ENCODE measurements at regions of chr5 and their contacts with region 1.

Region 1: GRCh38 chr5:54517174-54518092 is at the start of gene SNX18:
- DNase-seq: peak; percentile 87 to 91 (median 90)
- H3K4me3 ChIP-seq: peak within 1 kb of the TSS; percentile 82 to 91 (median 82)
- H3K4me3 Mint-ChIP-seq: peak within 1 kb of the TSS; percentile 96 to 97
- H3K27ac ChIP-seq: peak within 1 kb of the TSS; percentile 65 to 92
- H3K27ac Mint-ChIP-seq: peak within 1 kb of the TSS; percentile 71 to 94 (median 88)
- H3K4me1 ChIP-seq: peaks cover 31 to 38% of the 10 kb centered on the region in 2 donors
- H3K4me1 Mint-ChIP-seq: peaks cover 24% of the 10 kb centered on the region
- H3K27me3 ChIP-seq: peaks cover 0 to 8% of the 10 kb centered on the region in 2 donors
- H3K27me3 Mint-ChIP-seq: peaks cover 6 to 15% (median 9%) of the 10 kb centered on the region in 3 donors
- CTCF ChIP-seq: peak; percentile 97
- polyA plus RNA-seq, gene SNX18: 6.8 to 33.3 (median 12.4) TPM

Region 2: GRCh38 chr5:54469622-54470021 is 47.8 kb before region 1 on chr5:
- intact Hi-C with region 1: no loop called
- DNase-seq: no peak
- H3K4me3 ChIP-seq: no peak overlapping the region
- H3K4me3 Mint-ChIP-seq: peak overlapping the region in 1 of 2 donors; percentile 75
- H3K27ac ChIP-seq: no peak overlapping the region
- H3K27ac Mint-ChIP-seq: peak overlapping the region in 1 of 7 donors; percentile 7
- H3K4me1 ChIP-seq: peaks cover 0 to 2% of the 10 kb centered on the region in 2 donors
- H3K4me1 Mint-ChIP-seq: peaks cover 7% of the 10 kb centered on the region
- H3K27me3 ChIP-seq: no peaks in the 10 kb centered on the region
- H3K27me3 Mint-ChIP-seq: peaks cover 0 to 4% (median 3%) of the 10 kb centered on the region in 3 donors
- CTCF ChIP-seq: no peak

Region 3: DNA sequence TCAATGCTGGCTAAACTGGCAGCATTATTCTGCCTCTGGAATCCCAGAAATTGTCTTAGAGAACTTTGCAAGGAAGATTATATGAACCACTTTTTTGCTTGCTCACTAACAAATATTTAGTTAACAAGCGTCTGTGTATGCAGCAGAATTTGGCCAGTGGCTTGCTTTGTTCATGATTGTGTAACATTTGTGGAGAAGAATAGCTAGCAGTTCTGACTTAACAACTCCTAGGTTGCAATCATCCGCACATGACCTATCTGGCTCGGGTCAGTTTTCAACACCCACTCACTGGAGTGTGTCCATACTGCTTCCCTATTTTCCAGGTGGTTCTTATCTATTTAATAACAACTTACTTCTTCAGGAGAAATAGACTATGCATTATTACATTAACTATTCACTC is 98.6 kb after region 1 on chr5:
- intact Hi-C with region 1: loop called (anchors 5 to 10 kb)
- DNase-seq: peak; percentile 61 to 79 (median 74)
- H3K4me3 ChIP-seq: peak overlapping the region in 1 of 3 experiments; percentile 34
- H3K4me3 Mint-ChIP-seq: no peak overlapping the region
- H3K27ac ChIP-seq: peak overlapping the region in 1 of 2 donors; percentile 77
- H3K27ac Mint-ChIP-seq: peak overlapping the region; percentile 70 to 88 (median 86)
- H3K4me1 ChIP-seq: peaks cover 68 to 73% of the 10 kb centered on the region in 2 donors
- H3K4me1 Mint-ChIP-seq: peaks cover 82% of the 10 kb centered on the region
- H3K27me3 ChIP-seq: no peaks in the 10 kb centered on the region
- H3K27me3 Mint-ChIP-seq: no peaks in the 10 kb centered on the region
- CTCF ChIP-seq: no peak

Region 4: DNA sequence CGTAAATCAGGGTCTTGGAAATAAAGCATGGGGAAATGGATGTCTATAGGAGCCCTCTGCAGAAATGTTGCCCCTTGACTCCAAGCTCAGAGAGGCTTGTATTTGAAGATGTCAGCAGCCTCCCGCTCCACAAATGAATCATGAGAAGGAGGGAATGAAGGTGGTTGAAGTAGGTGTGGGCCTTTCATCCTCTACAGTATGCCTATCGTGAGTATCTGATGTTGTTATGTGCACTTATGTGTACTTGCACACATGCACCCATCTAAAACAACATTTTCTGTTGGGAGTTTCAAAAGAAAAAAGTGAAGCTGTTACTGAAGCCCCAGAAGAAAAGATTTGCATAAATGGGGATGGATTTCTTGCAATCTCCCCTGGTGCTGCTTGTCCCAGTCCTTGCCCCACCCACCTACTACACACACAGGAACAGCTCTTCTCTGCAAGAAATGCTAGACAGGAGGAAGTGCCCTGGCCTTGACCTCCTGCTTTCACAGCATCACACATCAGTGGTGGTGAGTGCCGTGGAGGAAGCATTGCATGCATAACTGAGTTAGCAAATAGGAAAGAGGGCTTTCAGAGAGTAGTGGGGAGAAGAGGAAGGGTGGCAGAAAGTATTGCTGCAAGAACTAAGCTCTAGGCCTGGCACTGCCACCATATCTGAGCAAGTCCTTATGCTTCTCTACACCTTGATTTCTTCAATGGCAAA is 156.2 kb after region 1 on chr5:
- intact Hi-C with region 1: loop called in 1 of 2 experiments (anchors 1 kb)
- DNase-seq: peak; percentile 96 to 97 (median 96)
- H3K4me3 ChIP-seq: peak overlapping the region in 1 of 3 experiments; percentile 52
- H3K4me3 Mint-ChIP-seq: peak overlapping the region in 1 of 2 donors; percentile 51
- H3K27ac ChIP-seq: peak overlapping the region; percentile 86 to 88
- H3K27ac Mint-ChIP-seq: peak overlapping the region; percentile 98 to 100 (median 99)
- H3K4me1 ChIP-seq: peaks cover 80 to 88% of the 10 kb centered on the region in 2 donors
- H3K4me1 Mint-ChIP-seq: peaks cover 79% of the 10 kb centered on the region
- H3K27me3 ChIP-seq: no peaks in the 10 kb centered on the region
- H3K27me3 Mint-ChIP-seq: peaks cover 0 to 2% (median 0%) of the 10 kb centered on the region in 3 donors
- CTCF ChIP-seq: no peak

Region 5: GRCh38 chr5:54844905-54845566 is 327.6 kb after region 1 on chr5:
- intact Hi-C with region 1: loop called (anchors 2 to 5 kb)
- DNase-seq: peak; percentile 41 to 69 (median 51)
- H3K4me3 ChIP-seq: peak overlapping the region in 2 of 3 experiments; percentile 28 to 52
- H3K4me3 Mint-ChIP-seq: peak overlapping the region; percentile 20 to 79
- H3K27ac ChIP-seq: peak overlapping the region in 1 of 2 donors; percentile 73
- H3K27ac Mint-ChIP-seq: peak overlapping the region in 5 of 7 donors; percentile 48 to 90 (median 71)
- H3K4me1 ChIP-seq: peaks cover 4 to 10% of the 10 kb centered on the region in 2 donors
- H3K4me1 Mint-ChIP-seq: peaks cover 11% of the 10 kb centered on the region
- H3K27me3 ChIP-seq: no peaks in the 10 kb centered on the region
- H3K27me3 Mint-ChIP-seq: peaks cover 0 to 5% (median 3%) of the 10 kb centered on the region in 3 donors
- CTCF ChIP-seq: peak; percentile 77

Region 6: DNA sequence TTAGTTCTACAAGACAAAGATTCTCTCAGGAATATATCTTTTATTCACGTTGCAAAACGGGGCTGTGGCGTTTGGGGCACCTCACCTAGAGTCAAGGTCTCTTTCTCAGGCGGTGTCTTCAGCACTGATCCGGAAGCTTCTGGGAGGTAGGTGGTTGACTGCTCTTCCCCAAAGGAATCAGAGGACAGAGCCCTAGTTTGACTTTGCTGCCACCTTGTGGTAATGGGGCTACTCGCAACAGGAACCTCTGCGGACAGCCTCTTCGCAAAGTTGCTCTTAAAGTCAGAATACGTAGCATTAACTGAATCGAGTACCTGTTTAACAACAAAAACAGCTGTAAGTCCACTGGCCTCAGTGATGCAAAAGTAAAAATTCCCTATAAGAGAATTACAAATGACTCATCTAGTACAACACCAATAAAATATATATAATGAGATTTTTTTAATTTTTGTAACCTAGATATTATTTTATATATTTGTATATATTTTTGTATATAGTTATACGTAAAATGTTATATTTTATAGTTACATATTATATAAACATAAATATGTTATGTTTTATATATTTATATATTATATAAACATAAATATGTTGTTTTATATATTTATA is 629.2 kb after region 1 on chr5:
- intact Hi-C with region 1: loop called in 1 of 2 experiments (anchors 5 kb)
- DNase-seq: peak; percentile 60 to 74 (median 72)
- H3K4me3 ChIP-seq: no peak overlapping the region
- H3K4me3 Mint-ChIP-seq: no peak overlapping the region
- H3K27ac ChIP-seq: no peak overlapping the region
- H3K27ac Mint-ChIP-seq: no peak overlapping the region
- H3K4me1 ChIP-seq: no peaks in the 10 kb centered on the region
- H3K4me1 Mint-ChIP-seq: peaks cover 3% of the 10 kb centered on the region
- H3K27me3 ChIP-seq: peaks cover 0 to 6% of the 10 kb centered on the region in 2 donors
- H3K27me3 Mint-ChIP-seq: peaks cover 4 to 16% (median 13%) of the 10 kb centered on the region in 3 donors
- CTCF ChIP-seq: peak; percentile 90